GM23248 (cell line): ENCODE measurements at regions of chr2 and their contacts with region 1.

Region 1: DNA sequence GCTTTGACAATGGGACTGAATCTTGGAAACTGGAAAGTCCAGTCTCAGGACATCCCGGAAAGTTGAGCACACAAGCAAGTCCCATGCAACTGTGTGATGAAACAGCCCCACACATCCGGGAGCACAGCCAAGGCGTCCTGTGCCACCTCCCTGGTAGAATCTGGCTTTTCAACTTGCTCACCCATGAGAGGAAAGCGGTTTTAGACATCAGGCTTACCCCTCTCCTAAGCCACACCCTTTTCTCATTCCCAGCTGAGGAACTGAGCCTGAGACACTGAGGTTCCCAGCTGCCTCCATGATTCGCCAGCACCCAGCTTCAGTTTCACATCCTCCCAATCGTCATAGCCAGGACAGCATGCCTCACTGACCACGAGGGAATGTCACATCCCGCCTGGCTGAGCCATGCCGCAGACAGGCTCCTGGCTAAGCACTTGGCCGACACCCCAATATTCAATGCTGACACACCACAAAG is 60.3 kb downstream of the STEAP3 start:
- DNase-seq: peak; percentile 98
- H3K4me3 ChIP-seq: peak overlapping the region; percentile 45; the same call in 1 of the 2 replicates
- H3K27ac ChIP-seq: peak overlapping the region; percentile 72
- H3K4me1 ChIP-seq: peaks cover 14% of the 10 kb centered on the region
- H3K27me3 ChIP-seq: no peaks in the 10 kb centered on the region

Region 2: DNA sequence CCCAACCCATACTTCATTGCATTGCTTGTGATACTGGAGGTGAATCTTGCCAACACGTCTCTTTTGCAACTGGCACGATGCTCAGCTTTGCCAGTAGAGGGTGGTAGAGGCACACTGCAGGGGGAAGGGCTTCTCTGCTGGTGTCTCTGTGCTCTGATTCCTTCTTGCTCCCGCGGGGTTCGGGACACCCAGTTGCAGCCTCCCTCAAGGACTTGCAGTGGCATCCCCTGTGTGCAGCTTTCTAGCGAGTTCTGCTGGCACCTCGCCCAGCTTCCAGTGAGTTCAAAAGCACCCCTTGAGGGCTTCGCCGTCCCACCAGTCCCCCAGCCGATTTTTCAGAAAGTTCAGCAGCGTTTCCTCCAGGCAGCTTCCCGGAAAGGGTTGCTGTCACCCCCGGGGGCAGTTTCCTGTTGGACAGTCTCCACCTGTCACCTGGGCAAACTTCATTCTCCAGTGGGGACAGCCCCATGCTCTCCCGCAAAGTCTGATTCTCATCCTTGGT is 401.1 kb before region 1 on chr2:
- in situ Hi-C with region 1: loop called (anchors 10 kb)
- DNase-seq: peak; percentile 81
- H3K4me3 ChIP-seq: peak overlapping the region; percentile 72
- H3K27ac ChIP-seq: no peak overlapping the region
- H3K4me1 ChIP-seq: no peaks in the 10 kb centered on the region
- H3K27me3 ChIP-seq: peaks cover 22% of the 10 kb centered on the region

Region 3: DNA sequence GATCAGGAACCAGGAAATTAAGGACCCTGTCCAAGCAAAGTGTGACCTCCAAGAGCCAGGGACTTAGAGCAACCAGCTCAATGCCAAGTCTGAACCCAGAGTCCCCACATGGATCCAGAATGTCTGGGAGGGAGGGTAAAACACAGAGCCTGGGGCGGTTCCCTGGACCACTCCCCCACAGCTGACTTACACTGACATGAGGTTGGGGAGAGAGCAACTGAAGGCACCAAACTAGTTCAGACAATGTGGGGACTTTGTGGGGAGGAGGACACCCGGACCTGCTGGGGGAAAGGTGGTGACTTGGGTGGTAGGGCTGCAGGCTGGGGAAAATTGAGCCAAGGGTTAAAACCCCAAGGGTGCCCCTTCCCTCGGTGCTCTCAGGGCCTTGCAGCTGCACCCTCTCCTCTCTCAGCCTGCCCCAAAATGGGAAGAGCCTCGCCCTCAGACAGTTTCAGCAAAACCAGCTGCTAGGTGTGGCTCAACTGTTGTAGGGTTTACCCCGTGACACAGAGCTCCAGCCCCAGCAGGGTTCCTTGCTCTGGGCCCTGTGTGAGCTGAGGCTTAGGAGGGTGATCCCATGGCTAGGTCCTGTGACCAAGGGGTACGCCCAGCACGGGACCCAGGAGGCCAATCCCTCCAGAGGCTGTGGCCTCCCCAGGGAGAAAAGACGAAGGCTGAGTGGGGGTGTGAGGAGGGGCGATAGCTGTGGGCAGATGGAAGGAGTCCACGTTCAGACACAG is 313.3 kb before region 1 on chr2:
- in situ Hi-C with region 1: no loop called
- DNase-seq: peak; percentile 7
- H3K4me3 ChIP-seq: no peak overlapping the region
- H3K27ac ChIP-seq: no peak overlapping the region
- H3K4me1 ChIP-seq: peaks cover 25% of the 10 kb centered on the region
- H3K27me3 ChIP-seq: peaks cover 18% of the 10 kb centered on the region